Caco-2 (cell line): ENCODE measurements at regions of chr6 and their contacts with region 1.

Region 1: DNA sequence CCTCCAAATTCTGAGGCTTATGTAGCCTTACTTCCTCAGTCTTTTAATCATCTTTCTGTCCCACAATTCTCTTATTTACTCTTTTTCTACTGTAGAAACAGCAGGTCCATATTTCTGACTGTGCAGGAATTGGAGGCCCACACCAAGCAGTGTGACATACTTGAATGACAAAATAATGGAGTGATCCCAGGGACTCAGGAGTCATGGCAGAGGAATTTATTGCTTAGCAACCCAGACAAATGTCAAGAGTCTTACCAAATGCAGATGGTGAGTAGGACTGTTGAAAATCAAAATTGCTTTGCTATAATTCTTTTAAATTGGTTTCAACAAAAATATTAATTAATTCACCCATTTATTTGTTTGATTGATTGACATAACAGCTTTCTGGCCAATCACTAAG is 59.9 kb downstream of the HTR1B start:
- DNase-seq: peak in 1 of 2 experiments; percentile 30
- H3K4me3 ChIP-seq: no peak overlapping the region
- H3K4me3 Mint-ChIP-seq: no peak overlapping the region
- H3K27ac Mint-ChIP-seq: peak overlapping the region; percentile 50
- H3K4me1 ChIP-seq: peaks cover 9% of the 10 kb centered on the region; the same call in 1 of the 2 replicates
- H3K4me1 Mint-ChIP-seq: no peaks in the 10 kb centered on the region
- H3K27me3 ChIP-seq: no peaks in the 10 kb centered on the region
- H3K27me3 Mint-ChIP-seq: no peaks in the 10 kb centered on the region
- CTCF ChIP-seq: no peak

Region 2: GRCh38 chr6:77383026-77383425 is 20.4 kb before region 1 on chr6:
- CTCF ChIA-PET with region 1: no interaction called
- POLR2A ChIA-PET with region 1: no interaction called
- intact Hi-C with region 1: loop called (anchors 2 kb)
- DNase-seq: peak; percentile 74 to 81
- H3K4me3 ChIP-seq: no peak overlapping the region
- H3K4me3 Mint-ChIP-seq: no peak overlapping the region
- H3K27ac Mint-ChIP-seq: peak overlapping the region; percentile 53
- H3K4me1 ChIP-seq: peaks cover 15% of the 10 kb centered on the region
- H3K4me1 Mint-ChIP-seq: peaks cover 19% of the 10 kb centered on the region
- H3K27me3 ChIP-seq: no peaks in the 10 kb centered on the region
- H3K27me3 Mint-ChIP-seq: no peaks in the 10 kb centered on the region
- CTCF ChIP-seq: no peak

Region 3: GRCh38 chr6:77440206-77440976 is 37.0 kb after region 1 on chr6:
- CTCF ChIA-PET with region 1: no interaction called
- POLR2A ChIA-PET with region 1: no interaction called
- intact Hi-C with region 1: no loop called
- DNase-seq: no peak
- H3K4me3 ChIP-seq: no peak overlapping the region
- H3K4me3 Mint-ChIP-seq: no peak overlapping the region
- H3K27ac Mint-ChIP-seq: no peak overlapping the region
- H3K4me1 ChIP-seq: no peaks in the 10 kb centered on the region
- H3K4me1 Mint-ChIP-seq: no peaks in the 10 kb centered on the region
- H3K27me3 ChIP-seq: no peaks in the 10 kb centered on the region
- H3K27me3 Mint-ChIP-seq: peaks cover 3% of the 10 kb centered on the region
- CTCF ChIP-seq: no peak